GM13977 (cell line): ENCODE measurements at regions of chr7 and their contacts with region 1.

Region 1: DNA sequence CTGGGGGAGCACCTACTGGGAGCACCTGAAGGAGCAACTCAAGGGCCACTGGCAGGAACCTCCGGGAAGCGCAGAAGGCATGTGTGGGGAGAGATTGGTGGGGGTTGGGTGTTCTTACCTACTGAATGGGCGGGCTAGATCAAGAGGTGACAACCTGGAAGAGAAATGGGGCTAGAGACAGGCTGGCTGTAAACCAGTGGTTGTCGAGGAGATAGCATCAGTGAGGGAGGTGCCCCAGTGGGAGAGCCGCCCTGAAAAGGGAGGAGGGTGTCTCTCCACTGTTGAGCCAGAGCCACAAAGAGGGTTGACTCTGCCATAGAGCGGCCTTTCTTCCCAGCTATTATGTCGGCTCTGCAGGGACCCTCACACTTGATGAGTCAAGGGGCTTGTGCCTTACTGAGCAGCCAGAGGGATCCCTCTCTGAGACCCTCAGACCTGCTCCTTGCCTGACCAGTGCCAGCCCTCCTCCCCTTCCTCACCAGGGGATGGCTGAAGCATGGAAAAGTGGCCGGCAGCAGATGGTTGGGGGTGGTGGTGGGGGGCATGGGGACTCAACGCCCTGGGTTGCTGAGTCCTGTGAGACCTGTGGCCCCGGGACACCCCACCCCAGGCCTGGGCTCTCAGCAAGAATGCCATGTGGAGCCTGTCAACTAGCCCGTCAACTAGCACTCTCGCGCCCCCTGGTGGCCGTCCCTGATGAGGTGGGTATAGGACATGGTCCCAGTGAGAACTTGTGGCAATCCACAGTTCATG is 36.5 kb upstream of the PURB start:
- DNase-seq: peak; percentile 82
- CTCF ChIP-seq: peak; percentile 95

Region 2: GRCh38 chr7:44595934-44596635 is 325.7 kb before region 1 on chr7:
- in situ Hi-C with region 1: loop called (anchors 10 kb)
- DNase-seq: no peak
- CTCF ChIP-seq: no peak

Region 3: GRCh38 chr7:44858161-44858560 is 63.6 kb before region 1 on chr7:
- in situ Hi-C with region 1: loop called (anchors 5 kb)
- DNase-seq: no peak
- CTCF ChIP-seq: peak; percentile 2

Region 4: DNA sequence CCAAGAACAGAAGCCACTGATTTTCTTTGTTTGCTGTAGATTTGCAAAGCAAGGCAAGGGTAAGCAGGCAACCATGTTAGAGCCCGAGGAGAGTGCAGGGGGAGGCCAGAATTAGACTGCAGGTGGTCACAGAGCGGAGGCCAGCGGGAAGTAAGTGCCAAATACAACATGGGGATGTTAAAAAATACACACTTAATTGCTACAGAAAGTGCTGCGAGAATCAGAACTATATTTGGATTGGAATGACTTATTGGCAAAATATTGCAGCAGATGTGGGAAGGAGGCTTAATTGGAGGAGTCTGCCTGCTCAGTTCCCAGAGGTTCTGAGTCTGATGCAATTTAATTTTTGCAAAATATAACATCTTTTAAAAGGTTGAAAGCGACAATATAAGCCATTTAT is 602.7 kb after region 1 on chr7:
- in situ Hi-C with region 1: no loop called
- DNase-seq: no peak
- CTCF ChIP-seq: no peak

Region 5: DNA sequence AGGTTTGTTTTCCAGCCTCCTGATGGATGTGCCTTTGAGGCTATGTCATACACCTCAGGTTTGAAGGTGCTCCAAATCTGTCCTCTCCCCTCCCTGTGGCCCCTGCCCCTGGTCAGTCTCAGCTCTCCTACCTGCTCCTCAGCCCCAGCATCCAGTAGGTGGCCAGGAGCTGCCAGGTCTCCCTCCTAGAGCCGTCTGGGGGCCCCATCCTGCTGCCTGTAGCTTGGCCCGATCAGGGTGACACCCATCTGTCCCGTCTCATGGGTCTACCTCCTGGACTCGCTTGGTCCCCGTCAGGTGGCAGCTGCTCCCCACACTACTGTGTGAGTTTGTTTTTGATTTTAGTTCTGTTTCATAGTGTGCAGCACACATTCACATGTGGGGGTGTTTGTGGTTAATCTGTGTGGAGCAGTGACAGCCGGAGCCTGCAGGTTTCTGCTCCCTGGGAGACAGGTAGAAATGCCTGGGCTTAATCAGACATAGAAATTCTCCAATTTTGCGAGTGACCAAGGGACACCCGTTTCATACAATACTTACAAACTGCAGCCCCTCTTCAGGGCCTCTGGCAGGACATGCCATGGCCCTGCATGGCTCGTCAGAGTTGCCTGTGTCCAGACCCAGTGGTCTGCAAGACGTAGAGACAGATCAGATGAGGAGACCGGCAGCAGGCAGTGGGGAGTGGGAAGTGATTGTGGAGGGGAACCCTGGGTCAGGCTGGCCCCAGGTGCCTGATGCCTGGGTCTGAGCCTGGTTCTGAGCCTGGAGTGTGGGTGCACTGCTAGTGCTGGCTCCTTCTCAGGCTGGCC is 669.5 kb after region 1 on chr7:
- in situ Hi-C with region 1: no loop called
- DNase-seq: no peak
- CTCF ChIP-seq: no peak